Activated CD8-positive, alpha-beta T cell treated with anti-CD3 and anti-CD28 coated beads for 36 hours (primary cell): ENCODE measurements at regions of chr10 and their contacts with region 1.

Region 1: GRCh38 chr10:88835096-88835909 is 16.3 kb downstream of the ANKRD22 start:
- DNase-seq: peak; percentile 95
- ATAC-seq: peak; percentile 84
- H3K4me3 Mint-ChIP-seq: no peak overlapping the region
- H3K27ac Mint-ChIP-seq: no peak overlapping the region
- H3K4me1 Mint-ChIP-seq: peaks cover 35% of the 10 kb centered on the region
- H3K27me3 Mint-ChIP-seq: no peaks in the 10 kb centered on the region
- CTCF ChIP-seq: peak; percentile 86

Region 2: DNA sequence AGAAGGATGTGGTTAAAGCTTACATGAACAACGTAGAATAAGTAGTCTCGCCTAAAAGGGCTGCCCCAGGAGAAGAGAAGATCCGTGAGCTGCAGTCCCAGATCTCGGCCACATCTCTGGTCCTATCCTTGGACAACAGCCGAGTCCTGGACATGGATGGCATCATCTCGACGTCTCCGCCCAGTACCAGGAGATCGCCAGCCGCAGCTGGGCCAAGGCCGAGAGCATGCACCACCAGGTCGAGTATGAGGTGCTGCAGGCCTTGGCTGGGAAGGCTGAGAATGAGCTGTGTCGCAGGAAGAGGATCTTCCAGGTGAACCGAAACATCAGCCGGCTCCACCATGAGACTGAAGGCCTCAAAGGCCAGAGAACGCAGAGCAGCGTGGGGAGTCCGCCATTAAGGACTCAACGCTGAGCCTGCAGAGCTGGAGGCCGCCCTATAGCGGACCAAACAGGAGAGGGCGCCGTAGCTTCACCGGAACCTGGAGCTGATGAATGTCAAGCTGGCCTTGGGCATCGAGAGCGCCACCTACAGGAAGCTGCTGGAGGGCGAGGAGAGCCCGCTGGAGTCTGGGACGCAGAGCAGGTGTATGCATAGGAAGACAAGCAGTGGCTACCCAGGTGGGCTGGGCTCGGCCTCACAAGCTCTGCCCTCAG is 107.1 kb before region 1 on chr10:
- CTCF ChIA-PET with region 1: interaction called, 20 read pairs
- POLR2A ChIA-PET with region 1: no interaction called
- intact Hi-C with region 1: no loop called
- DNase-seq: peak; percentile 78
- ATAC-seq: peak; percentile 81
- H3K4me3 Mint-ChIP-seq: no peak overlapping the region
- H3K27ac Mint-ChIP-seq: no peak overlapping the region
- H3K4me1 Mint-ChIP-seq: peaks cover 4% of the 10 kb centered on the region
- H3K27me3 Mint-ChIP-seq: peaks cover 4% of the 10 kb centered on the region
- CTCF ChIP-seq: peak; percentile 61

Region 3: DNA sequence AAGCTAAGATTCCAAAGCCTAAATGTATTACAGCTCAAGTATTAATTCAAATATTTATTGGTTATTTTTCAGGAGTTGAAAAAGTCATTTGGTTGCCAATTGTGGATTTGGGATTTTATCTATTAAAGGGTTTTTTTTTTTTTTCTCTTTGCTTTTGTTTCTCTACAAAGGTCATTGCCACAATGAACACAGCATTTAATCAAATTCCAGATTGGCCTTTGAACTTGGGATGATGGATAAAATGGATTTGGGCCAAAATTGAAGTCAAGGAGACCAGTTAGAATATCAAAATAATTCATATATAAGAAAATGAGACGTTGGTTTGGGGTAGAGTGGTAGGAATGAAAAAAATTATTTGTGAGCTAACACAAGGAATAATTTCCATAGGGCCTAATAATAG is 65.9 kb before region 1 on chr10:
- CTCF ChIA-PET with region 1: no interaction called
- POLR2A ChIA-PET with region 1: no interaction called
- intact Hi-C with region 1: no loop called
- DNase-seq: no peak
- ATAC-seq: no peak
- H3K4me3 Mint-ChIP-seq: no peak overlapping the region
- H3K27ac Mint-ChIP-seq: no peak overlapping the region
- H3K4me1 Mint-ChIP-seq: no peaks in the 10 kb centered on the region
- H3K27me3 Mint-ChIP-seq: peaks cover 4% of the 10 kb centered on the region
- CTCF ChIP-seq: no peak

Region 4: DNA sequence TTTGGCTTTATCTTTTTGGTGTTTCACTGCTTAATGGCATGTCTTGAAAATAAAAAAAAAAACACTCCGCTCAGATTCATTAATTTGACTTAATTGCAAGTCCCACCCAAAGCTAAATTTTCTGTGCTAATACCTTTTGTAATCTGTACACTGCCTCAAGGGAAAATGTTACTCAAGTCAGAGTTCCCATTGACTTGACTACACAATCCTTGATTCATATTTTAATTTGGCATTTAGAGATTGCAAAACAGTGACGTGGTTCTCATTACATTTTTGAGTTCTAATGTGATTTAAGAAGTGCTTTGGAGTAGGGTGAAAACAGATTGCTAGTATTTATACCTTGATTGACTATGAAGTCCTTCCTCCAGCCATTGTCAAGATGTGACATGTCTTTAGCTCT is 54.1 kb before region 1 on chr10:
- CTCF ChIA-PET with region 1: no interaction called
- POLR2A ChIA-PET with region 1: no interaction called
- intact Hi-C with region 1: no loop called
- DNase-seq: no peak
- ATAC-seq: no peak
- H3K4me3 Mint-ChIP-seq: no peak overlapping the region
- H3K27ac Mint-ChIP-seq: no peak overlapping the region
- H3K4me1 Mint-ChIP-seq: peaks cover 3% of the 10 kb centered on the region
- H3K27me3 Mint-ChIP-seq: peaks cover 1% of the 10 kb centered on the region
- CTCF ChIP-seq: no peak

Region 5: DNA sequence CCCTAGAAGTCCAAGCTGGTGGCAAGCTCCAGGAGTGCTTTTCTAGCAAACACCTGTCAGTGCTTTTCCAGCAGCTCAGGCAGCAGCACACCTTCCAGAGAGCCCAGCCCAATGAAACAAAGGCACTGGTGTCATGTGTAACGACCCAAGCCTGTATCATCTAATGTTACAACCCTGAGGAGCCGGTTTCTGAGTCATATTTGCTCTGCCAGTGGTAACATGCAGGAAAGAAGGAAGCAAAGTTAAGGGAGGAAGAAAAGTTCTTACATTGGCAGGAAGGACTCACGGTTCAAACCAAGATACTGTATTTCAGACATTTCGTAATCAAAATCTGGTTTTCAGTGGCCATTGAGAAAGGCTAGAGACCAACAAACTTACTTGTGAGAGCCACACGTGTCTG is 16.4 kb after region 1 on chr10 and contains the start of gene ANKRD22:
- CTCF ChIA-PET with region 1: interaction called, 17 read pairs
- POLR2A ChIA-PET with region 1: interaction called, 3 read pairs
- intact Hi-C with region 1: no loop called
- DNase-seq: no peak
- ATAC-seq: no peak
- H3K4me3 Mint-ChIP-seq: no peak within 1 kb of the TSS
- H3K27ac Mint-ChIP-seq: no peak within 1 kb of the TSS
- H3K4me1 Mint-ChIP-seq: peaks cover 15% of the 10 kb centered on the region
- H3K27me3 Mint-ChIP-seq: peaks cover 4% of the 10 kb centered on the region
- CTCF ChIP-seq: no peak
- total RNA-seq, gene ANKRD22: not detected

Region 6: DNA sequence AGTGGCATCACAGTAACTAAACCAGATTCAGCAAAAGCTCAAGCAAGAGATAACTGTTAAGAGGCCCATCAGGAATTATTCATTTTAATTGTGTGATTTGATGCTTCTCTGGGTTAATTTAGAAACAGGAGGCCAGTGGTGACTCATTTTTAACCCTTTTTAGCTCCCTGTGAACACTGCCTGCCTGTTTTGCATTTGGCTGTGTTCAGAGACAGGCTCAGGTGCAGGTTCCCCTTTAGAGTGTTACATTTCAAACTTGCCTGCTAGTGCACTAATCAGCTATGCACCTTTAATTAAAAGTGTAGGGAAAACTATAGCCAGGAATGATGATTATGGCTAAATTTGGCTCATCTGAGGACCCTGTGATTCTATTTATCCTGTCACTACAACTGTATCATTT is 51.3 kb after region 1 on chr10:
- CTCF ChIA-PET with region 1: interaction called, 14 read pairs
- POLR2A ChIA-PET with region 1: interaction called, 4 read pairs
- intact Hi-C with region 1: no loop called
- DNase-seq: peak; percentile 44
- ATAC-seq: peak; percentile 90
- H3K4me3 Mint-ChIP-seq: no peak overlapping the region
- H3K27ac Mint-ChIP-seq: peak overlapping the region; percentile 5
- H3K4me1 Mint-ChIP-seq: peaks cover 81% of the 10 kb centered on the region
- H3K27me3 Mint-ChIP-seq: no peaks in the 10 kb centered on the region
- CTCF ChIP-seq: no peak

Region 7: GRCh38 chr10:88923520-88923919 is 88.2 kb after region 1 on chr10:
- CTCF ChIA-PET with region 1: interaction called, 432 read pairs
- POLR2A ChIA-PET with region 1: interaction called, 5 read pairs
- intact Hi-C with region 1: no loop called
- DNase-seq: no peak
- ATAC-seq: no peak
- H3K4me3 Mint-ChIP-seq: no peak overlapping the region
- H3K27ac Mint-ChIP-seq: no peak overlapping the region
- H3K4me1 Mint-ChIP-seq: peaks cover 3% of the 10 kb centered on the region
- H3K27me3 Mint-ChIP-seq: no peaks in the 10 kb centered on the region
- CTCF ChIP-seq: no peak